ENCODE measurements at regions of chr7 and their contacts with region 1.

Region 1: GRCh38 chr7:107044347-107045194 is at the start of gene PRKAR2B:
- DNase-seq: peak; percentile 91
- H3K4me3 ChIP-seq: peak within 1 kb of the TSS; percentile 94
- H3K27ac ChIP-seq: peak within 1 kb of the TSS; percentile 59
- H3K4me1 ChIP-seq: peaks cover 37% of the 10 kb centered on the region
- CTCF ChIP-seq: no peak
- total RNA-seq, gene PRKAR2B: 69.0 and 91.1 TPM in 2 replicates

Region 2: DNA sequence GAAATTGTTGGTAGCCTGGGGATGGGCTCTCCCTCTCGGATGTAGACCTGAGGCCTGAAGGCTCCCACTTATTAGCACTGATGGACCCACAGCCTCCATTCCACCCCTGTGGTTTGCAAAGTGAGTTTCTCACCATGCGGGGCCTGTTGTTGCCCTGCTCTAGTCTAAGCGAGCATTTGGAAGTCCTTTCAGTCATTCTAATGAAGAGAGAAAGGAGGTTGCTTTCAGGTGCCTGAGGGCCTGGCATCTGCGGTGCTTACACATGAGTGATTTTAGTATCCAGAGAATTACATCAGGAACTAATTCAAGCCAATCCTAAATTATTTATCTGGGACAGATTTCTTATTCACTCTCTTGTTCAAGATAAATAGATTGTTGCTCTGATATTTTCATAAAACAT is 821.4 kb before region 1 on chr7:
- CTCF ChIA-PET with region 1: no interaction called
- POLR2A ChIA-PET with region 1: no interaction called
- intact Hi-C with region 1: no loop called
- DNase-seq: no peak
- H3K4me3 ChIP-seq: no peak overlapping the region
- H3K27ac ChIP-seq: no peak overlapping the region
- H3K4me1 ChIP-seq: no peaks in the 10 kb centered on the region
- CTCF ChIP-seq: no peak

Region 3: DNA sequence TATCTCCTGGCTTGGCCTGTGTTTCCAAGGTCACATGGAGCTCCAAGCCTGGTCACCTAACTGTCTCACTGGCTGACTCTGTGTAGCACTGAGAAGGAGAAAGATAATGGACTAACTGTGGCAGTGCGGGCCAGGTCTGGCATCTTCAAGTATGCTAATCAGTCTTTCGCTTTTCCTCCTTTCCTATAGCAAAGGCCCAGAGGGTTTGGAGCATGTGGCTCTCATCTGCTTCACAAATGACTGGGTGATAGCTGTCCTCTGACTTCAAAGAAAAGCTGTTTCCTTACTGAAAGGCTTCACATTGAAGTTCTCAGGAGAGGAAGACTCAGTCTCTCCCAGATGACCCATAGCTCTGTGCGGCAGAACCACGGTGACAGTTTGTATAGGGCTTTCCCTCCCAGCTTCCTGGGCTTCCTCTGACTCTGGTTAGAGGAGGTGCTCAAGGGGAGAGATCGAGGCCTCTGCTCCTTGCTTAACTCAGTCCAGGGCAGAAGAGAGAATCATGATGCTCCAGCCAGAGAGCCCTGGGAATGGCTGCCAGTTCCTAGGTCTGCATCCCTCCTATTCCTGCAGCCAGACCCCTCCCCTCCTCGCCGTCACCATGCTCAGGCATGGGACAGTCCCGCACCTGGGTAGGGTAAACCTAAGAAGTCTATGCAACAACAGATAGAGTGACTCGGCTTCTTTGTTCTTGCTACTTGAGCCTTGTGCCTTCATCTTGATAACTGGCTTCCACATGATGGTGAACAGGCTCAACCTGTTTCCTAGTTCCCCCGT is 456.0 kb before region 1 on chr7:
- CTCF ChIA-PET with region 1: no interaction called
- POLR2A ChIA-PET with region 1: no interaction called
- intact Hi-C with region 1: no loop called
- DNase-seq: no peak
- H3K4me3 ChIP-seq: no peak overlapping the region
- H3K27ac ChIP-seq: no peak overlapping the region
- H3K4me1 ChIP-seq: no peaks in the 10 kb centered on the region
- CTCF ChIP-seq: no peak

Region 4: DNA sequence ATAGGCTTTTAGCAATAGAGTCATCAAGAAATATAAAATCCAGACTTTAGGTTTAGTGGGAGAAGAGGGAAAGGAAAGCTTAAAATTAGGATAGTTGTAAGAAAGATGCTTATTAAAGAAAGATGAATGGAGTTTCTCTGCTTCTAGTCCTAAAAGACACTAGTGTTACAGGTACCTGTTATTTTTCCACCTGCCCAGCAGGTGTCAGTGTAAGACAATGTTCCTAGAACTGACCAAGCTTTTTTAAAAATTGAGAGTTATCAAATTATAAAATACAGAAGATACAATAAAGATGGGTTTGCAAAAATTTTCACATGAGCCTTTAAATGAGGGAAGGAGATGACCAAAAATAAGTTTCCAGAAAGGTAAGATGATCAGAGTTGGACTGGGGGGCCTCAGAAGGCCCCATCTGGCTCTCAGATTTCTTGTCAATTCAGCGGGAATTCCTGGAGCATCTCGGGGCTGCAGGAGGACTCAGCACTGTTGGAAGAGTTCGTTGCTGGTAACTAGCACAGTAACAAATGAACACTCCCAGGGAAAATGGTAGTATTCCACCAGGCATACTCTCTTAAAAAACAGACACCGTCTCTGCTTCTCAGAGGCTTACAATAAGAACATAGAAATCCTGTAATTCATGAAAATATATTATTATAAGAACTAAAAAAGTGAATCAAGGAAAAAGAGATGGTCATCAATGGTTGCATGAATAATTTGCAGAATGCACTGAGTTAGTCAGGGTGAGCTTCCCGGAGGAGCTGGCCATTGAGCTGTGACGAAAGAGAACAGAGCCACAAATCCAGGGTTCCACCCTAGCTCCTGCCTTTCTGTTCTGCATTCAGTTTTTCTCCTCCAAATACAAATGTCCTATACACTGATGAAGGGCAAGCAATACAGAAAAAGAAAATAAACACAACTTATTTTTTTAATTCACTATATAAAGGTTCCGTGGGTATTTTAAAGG is 251.3 kb before region 1 on chr7:
- CTCF ChIA-PET with region 1: no interaction called
- POLR2A ChIA-PET with region 1: no interaction called
- intact Hi-C with region 1: loop called (anchors 5 kb)
- DNase-seq: peak; percentile 70
- H3K4me3 ChIP-seq: no peak overlapping the region
- H3K27ac ChIP-seq: no peak overlapping the region
- H3K4me1 ChIP-seq: no peaks in the 10 kb centered on the region
- CTCF ChIP-seq: peak; percentile 96

Region 5: GRCh38 chr7:106806556-106806955 is 238.0 kb before region 1 on chr7:
- CTCF ChIA-PET with region 1: no interaction called
- POLR2A ChIA-PET with region 1: no interaction called
- intact Hi-C with region 1: no loop called
- DNase-seq: no peak
- H3K4me3 ChIP-seq: no peak overlapping the region
- H3K27ac ChIP-seq: no peak overlapping the region
- H3K4me1 ChIP-seq: peaks cover 6% of the 10 kb centered on the region
- CTCF ChIP-seq: no peak

Region 6: GRCh38 chr7:106947244-106947728 is 97.3 kb before region 1 on chr7:
- CTCF ChIA-PET with region 1: no interaction called
- POLR2A ChIA-PET with region 1: interaction called, 9 read pairs
- intact Hi-C with region 1: loop called (anchors 2 kb)
- DNase-seq: peak; percentile 92
- H3K4me3 ChIP-seq: no peak overlapping the region
- H3K27ac ChIP-seq: no peak overlapping the region
- H3K4me1 ChIP-seq: peaks cover 18% of the 10 kb centered on the region
- CTCF ChIP-seq: peak; percentile 99

Region 7: GRCh38 chr7:107056728-107057473 is 12.3 kb after region 1 on chr7:
- CTCF ChIA-PET with region 1: interaction called, 6 read pairs
- POLR2A ChIA-PET with region 1: interaction called, 11 read pairs
- intact Hi-C with region 1: no loop called
- DNase-seq: no peak
- H3K4me3 ChIP-seq: peak overlapping the region; percentile 36
- H3K27ac ChIP-seq: peak overlapping the region; percentile 33
- H3K4me1 ChIP-seq: peaks cover 50% of the 10 kb centered on the region
- CTCF ChIP-seq: no peak

Region 8: GRCh38 chr7:107130487-107131225 is 86.1 kb after region 1 on chr7:
- CTCF ChIA-PET with region 1: no interaction called
- POLR2A ChIA-PET with region 1: interaction called, 4 read pairs
- intact Hi-C with region 1: loop called (anchors 2 kb)
- DNase-seq: no peak
- H3K4me3 ChIP-seq: no peak overlapping the region
- H3K27ac ChIP-seq: no peak overlapping the region
- H3K4me1 ChIP-seq: peaks cover 30% of the 10 kb centered on the region
- CTCF ChIP-seq: 0 out of 2 replicates have a peak, but pooled peaks have one; percentile 23

Region 9: GRCh38 chr7:107168233-107169119 is 123.9 kb after region 1 on chr7 and contains the start of gene HBP1:
- CTCF ChIA-PET with region 1: no interaction called
- POLR2A ChIA-PET with region 1: interaction called, 5 read pairs
- intact Hi-C with region 1: loop called (anchors 5 kb)
- DNase-seq: peak; percentile 99
- H3K4me3 ChIP-seq: peak within 1 kb of the TSS; percentile 80
- H3K27ac ChIP-seq: peak within 1 kb of the TSS; percentile 70
- H3K4me1 ChIP-seq: peaks cover 11% of the 10 kb centered on the region
- CTCF ChIP-seq: no peak
- total RNA-seq, gene HBP1: 9.3 and 10.9 TPM in 2 replicates